Dendritic cell treated with granulocyte-macrophage colony-stimulating factor and Interleukin-4, amounts not matched to agents 40 ng/mL and 50 ng/mL, for 4 days (primary cell): ENCODE measurements at regions of chr1 and their contacts with region 1.

Region 1: GRCh38 chr1:155678027-155678426 is 10.5 kb downstream of the YY1AP1 start:
- H3K4me3 Mint-ChIP-seq: no peak overlapping the region
- H3K27ac Mint-ChIP-seq: no peak overlapping the region
- H3K4me1 Mint-ChIP-seq: peaks cover 36% of the 10 kb centered on the region
- H3K27me3 Mint-ChIP-seq: no peaks in the 10 kb centered on the region

Region 2: GRCh38 chr1:155729031-155729898 is 51.2 kb after region 1 on chr1:
- intact Hi-C with region 1: loop called (anchors 10 kb)
- H3K4me3 Mint-ChIP-seq: no peak overlapping the region
- H3K27ac Mint-ChIP-seq: no peak overlapping the region
- H3K4me1 Mint-ChIP-seq: no peaks in the 10 kb centered on the region
- H3K27me3 Mint-ChIP-seq: no peaks in the 10 kb centered on the region